ENCODE measurements at regions of chr15 and their contacts with region 1.

Region 1: GRCh38 chr15:68559345-68560310 is 19.2 kb upstream of the CORO2B start:
- DNase-seq: peak in 1 of 2 experiments; percentile 80
- H3K4me3 ChIP-seq: peak overlapping the region; percentile 47; the same call in 1 of the 2 replicates
- H3K27ac ChIP-seq: no peak overlapping the region
- H3K4me1 ChIP-seq: no peaks in the 10 kb centered on the region
- H3K27me3 ChIP-seq: no peaks in the 10 kb centered on the region
- CTCF ChIP-seq: peak; percentile 90

Region 2: GRCh38 chr15:68441045-68441743 is 118.4 kb before region 1 on chr15:
- CTCF ChIA-PET with region 1: no interaction called
- POLR2A ChIA-PET with region 1: no interaction called
- intact Hi-C with region 1: no loop called
- DNase-seq: no peak
- H3K4me3 ChIP-seq: no peak overlapping the region
- H3K27ac ChIP-seq: no peak overlapping the region
- H3K4me1 ChIP-seq: no peaks in the 10 kb centered on the region
- H3K27me3 ChIP-seq: peaks cover 53% of the 10 kb centered on the region
- CTCF ChIP-seq: no peak

Region 3: DNA sequence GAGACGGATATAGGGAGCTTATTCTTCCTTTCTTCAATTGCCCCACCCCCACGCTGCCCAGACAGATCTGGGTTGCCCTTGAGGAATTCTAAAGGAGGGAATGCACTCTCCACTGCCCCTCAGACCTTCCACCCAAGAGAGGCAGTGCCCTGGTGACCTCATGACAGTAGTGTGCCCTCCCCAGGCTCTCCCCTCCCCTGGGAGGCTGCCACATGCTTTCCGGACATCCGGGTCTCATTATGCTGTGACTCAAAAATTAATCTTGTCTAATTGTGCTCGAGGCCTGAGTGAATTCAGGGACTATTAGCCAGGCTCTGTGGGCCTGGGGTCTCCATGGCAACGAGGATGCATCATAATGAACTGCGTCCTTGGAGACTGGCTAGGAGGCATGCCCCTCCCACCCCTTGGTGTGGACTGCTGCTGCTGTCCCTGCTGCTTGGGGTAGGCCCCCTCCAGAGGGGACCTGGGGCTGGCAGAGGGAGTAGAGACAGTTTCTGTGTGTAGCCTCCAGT is 40.0 kb after region 1 on chr15:
- CTCF ChIA-PET with region 1: no interaction called
- POLR2A ChIA-PET with region 1: no interaction called
- intact Hi-C with region 1: no loop called
- DNase-seq: no peak
- H3K4me3 ChIP-seq: no peak overlapping the region
- H3K27ac ChIP-seq: no peak overlapping the region
- H3K4me1 ChIP-seq: no peaks in the 10 kb centered on the region
- H3K27me3 ChIP-seq: no peaks in the 10 kb centered on the region
- CTCF ChIP-seq: no peak

Region 4: DNA sequence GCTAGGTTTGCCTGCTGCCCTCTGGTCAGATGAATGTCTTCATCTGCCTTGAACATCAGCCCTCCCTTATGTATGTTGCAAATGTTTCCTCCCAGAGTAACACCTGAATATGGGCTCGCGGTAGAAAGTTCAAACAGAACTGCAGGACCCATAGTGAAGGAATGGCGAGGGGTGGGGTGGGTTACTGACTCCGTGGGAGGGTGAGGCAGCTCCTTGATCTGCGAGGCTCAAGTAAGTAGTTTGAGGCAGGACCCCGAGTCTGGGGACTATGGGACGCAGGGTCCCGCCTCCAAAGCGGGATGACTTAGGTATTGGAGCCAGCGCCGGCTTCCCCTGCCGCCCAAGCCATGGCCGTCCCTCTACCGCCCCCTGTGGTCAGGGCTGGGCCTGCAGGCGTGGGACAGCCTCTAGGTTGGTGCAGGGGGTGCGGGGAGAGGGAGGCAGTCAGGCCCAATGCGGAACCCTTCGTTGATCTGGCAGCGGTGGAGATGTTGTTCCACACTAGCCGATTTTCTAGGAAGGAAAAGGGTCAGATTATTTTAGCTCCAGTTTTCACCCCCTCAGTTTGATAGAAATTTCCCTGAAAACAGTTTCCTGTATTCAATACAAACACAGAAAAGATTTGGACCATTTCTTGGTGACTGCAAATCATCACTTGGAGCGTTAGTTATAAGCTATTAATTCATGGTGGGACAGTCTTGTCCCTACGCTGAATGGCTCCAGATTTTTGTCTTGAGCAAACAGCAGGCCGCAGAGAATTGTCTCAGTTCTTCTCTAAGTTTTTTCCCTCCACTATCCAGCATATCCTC is 91.5 kb after region 1 on chr15:
- CTCF ChIA-PET with region 1: no interaction called
- POLR2A ChIA-PET with region 1: no interaction called
- intact Hi-C with region 1: loop called (anchors 5 kb)
- DNase-seq: peak in 1 of 2 experiments; percentile 31
- H3K4me3 ChIP-seq: no peak overlapping the region
- H3K27ac ChIP-seq: no peak overlapping the region
- H3K4me1 ChIP-seq: no peaks in the 10 kb centered on the region
- H3K27me3 ChIP-seq: no peaks in the 10 kb centered on the region
- CTCF ChIP-seq: peak; percentile 66

Region 5: DNA sequence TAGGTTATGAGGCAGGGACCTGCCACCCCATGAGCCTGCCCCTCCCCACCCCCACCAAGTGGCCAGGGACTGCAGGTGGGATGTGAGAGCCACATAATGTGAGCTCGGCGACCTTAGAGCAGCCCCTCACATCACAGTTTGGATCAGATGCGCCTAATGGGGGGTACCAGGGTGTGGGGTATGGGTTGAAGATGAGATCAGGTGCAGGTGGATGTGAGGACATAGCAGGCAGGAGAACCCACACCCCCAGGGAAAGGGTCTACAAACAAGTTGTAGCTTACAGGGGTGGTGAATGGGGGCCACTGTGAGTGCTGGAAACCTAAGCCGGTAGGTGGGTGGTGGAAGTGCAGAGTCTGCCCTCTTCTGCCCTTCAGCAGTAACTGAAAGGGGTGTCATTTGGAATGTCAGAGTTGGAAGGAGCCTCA is 113.2 kb after region 1 on chr15:
- CTCF ChIA-PET with region 1: interaction called, 10 read pairs
- POLR2A ChIA-PET with region 1: interaction called, 3 read pairs
- intact Hi-C with region 1: loop called (anchors 1 kb)
- DNase-seq: no peak
- H3K4me3 ChIP-seq: no peak overlapping the region
- H3K27ac ChIP-seq: no peak overlapping the region
- H3K4me1 ChIP-seq: no peaks in the 10 kb centered on the region
- H3K27me3 ChIP-seq: no peaks in the 10 kb centered on the region
- CTCF ChIP-seq: 0 out of 2 replicates have a peak, but pooled peaks have one; percentile 23

Region 6: GRCh38 chr15:68783226-68784058 is 223.8 kb after region 1 on chr15:
- CTCF ChIA-PET with region 1: no interaction called
- POLR2A ChIA-PET with region 1: no interaction called
- intact Hi-C with region 1: loop called (anchors 10 kb)
- DNase-seq: peak in 1 of 2 experiments; percentile 32
- H3K4me3 ChIP-seq: no peak overlapping the region
- H3K27ac ChIP-seq: no peak overlapping the region
- H3K4me1 ChIP-seq: no peaks in the 10 kb centered on the region
- H3K27me3 ChIP-seq: no peaks in the 10 kb centered on the region
- CTCF ChIP-seq: peak; percentile 66

Region 7: GRCh38 chr15:68924866-68925560 is 365.4 kb after region 1 on chr15:
- CTCF ChIA-PET with region 1: interaction called, 4 read pairs
- POLR2A ChIA-PET with region 1: no interaction called
- intact Hi-C with region 1: loop called (anchors 1 kb)
- DNase-seq: peak; percentile 48 to 77
- H3K4me3 ChIP-seq: no peak overlapping the region
- H3K27ac ChIP-seq: no peak overlapping the region
- H3K4me1 ChIP-seq: no peaks in the 10 kb centered on the region
- H3K27me3 ChIP-seq: no peaks in the 10 kb centered on the region
- CTCF ChIP-seq: peak; percentile 86